HepG2 (cell line): ENCODE measurements at regions of chr11 and their contacts with region 1.

Region 1: GRCh38 chr11:100575870-100576705 is 111.0 kb upstream of the ARHGAP42 start:
- DNase-seq: peak; percentile 41
- ATAC-seq: peak; percentile 80
- H3K4me3 ChIP-seq: no peak overlapping the region
- H3K27ac ChIP-seq: no peak overlapping the region
- H3K4me1 ChIP-seq: no peaks in the 10 kb centered on the region
- H3K27me3 ChIP-seq: no peaks in the 10 kb centered on the region
- CTCF ChIP-seq: peak; percentile 73
- EP300 ChIP-seq: no peak
- POLR2A ChIP-seq: no peak
- RAD21 ChIP-seq: peak; percentile 53; the same call in 1 of the 2 replicates

Region 2: DNA sequence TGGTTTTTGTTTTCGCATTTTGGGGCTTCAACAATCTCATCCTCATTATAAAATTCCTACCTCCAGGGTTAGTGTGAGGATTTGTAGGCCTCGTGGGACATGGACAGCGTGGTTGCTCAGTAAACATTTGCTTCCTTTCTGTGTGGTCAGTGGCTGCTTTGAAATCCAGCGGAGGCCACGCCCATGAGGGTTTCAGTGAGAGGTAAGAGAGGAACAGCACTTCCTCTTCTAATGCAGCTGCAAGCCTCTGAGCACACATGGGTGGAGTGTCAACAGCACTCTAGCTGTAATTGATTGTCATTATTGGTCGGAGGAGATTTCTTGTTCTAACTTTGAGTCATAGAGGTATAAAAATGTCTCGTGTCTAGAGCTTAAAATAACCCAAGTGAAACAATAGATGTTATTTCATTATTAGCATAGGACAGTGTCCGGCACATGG is 105.0 kb after region 1 on chr11:
- CTCF ChIA-PET with region 1: no interaction called
- POLR2A ChIA-PET with region 1: no interaction called
- in situ Hi-C with region 1: no loop called
- intact Hi-C with region 1: loop called (anchors 5 kb)
- DNase-seq: peak; percentile 76
- ATAC-seq: peak; percentile 90
- H3K4me3 ChIP-seq: no peak overlapping the region
- H3K27ac ChIP-seq: no peak overlapping the region
- H3K4me1 ChIP-seq: peaks cover 38% of the 10 kb centered on the region
- H3K27me3 ChIP-seq: no peaks in the 10 kb centered on the region
- CTCF ChIP-seq: no peak
- EP300 ChIP-seq: no peak; a peak in 1 of 4 replicates
- POLR2A ChIP-seq: no peak
- RAD21 ChIP-seq: no peak